Activated T-helper 1 cell treated with anti-CD3 and anti-CD28 coated beads, Interleukin-12 subunit alpha, Interleukin-12 subunit beta, Interleukin-2, Interleukin-4 antibody, amounts not matched to agents 30 ng/mL and 10 ng/mL and 1 ng/mL, durations not matched to agents 14 hours and 24 hours and 36 hours (primary cell): ENCODE measurements at regions of chrX and their contacts with region 1.

Region 1: DNA sequence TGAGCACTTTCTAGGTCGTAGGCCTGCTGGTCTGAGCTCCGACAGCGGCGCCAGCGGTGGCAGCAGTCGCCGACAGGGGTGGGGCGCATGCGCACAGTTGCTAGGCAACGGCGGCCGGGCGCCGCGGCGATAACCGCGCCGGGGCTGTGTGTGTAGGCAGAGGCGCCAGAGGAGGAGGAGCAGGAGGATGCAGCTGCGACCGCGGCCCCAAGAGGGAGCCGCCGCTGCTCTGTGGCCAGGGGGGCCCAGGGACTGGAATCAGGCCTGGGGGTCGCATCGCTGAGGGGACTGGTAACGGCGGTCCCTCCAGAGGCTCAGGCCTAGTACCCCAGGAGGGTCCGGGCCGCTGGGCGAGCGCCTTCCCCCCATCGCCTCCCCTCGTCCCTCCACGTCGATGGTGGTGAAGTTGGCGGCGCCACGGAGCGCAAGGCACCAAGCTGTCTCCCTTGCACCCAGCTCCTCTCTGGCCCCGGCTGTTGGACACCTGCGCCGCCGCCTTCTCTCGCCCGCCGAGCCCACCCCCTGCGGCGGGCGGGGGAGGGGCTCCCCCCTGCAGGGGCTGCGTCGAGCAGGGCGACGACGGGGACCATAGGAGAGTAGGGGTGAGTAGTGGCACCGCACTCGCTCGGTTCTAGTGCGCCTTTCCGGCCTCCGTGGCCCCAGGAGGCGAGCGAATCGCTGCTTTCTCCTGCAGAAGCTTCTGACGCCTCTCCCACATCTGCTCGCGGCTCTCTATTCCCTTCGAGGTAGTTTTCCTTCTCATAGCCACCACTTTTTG is 58.6 kb upstream of the ZC4H2 start:
- DNase-seq: peak; percentile 76
- H3K4me3 Mint-ChIP-seq: peak within 1 kb of the TSS; percentile 91
- H3K27ac Mint-ChIP-seq: peak within 1 kb of the TSS; percentile 92
- H3K4me1 Mint-ChIP-seq: peaks cover 20% of the 10 kb centered on the region
- H3K27me3 Mint-ChIP-seq: no peaks in the 10 kb centered on the region

Region 2: GRCh38 chrX:64394874-64395567 is 639.8 kb before region 1 on chrX and contains the start of gene MTMR8:
- intact Hi-C with region 1: loop called (anchors 1 kb)
- DNase-seq: peak; percentile 65
- H3K4me3 Mint-ChIP-seq: peak within 1 kb of the TSS; percentile 87
- H3K27ac Mint-ChIP-seq: peak within 1 kb of the TSS; percentile 54
- H3K4me1 Mint-ChIP-seq: peaks cover 17% of the 10 kb centered on the region
- H3K27me3 Mint-ChIP-seq: no peaks in the 10 kb centered on the region
- total RNA-seq, gene MTMR8: 4.1 and 7.1 TPM in 2 replicates

Region 3: DNA sequence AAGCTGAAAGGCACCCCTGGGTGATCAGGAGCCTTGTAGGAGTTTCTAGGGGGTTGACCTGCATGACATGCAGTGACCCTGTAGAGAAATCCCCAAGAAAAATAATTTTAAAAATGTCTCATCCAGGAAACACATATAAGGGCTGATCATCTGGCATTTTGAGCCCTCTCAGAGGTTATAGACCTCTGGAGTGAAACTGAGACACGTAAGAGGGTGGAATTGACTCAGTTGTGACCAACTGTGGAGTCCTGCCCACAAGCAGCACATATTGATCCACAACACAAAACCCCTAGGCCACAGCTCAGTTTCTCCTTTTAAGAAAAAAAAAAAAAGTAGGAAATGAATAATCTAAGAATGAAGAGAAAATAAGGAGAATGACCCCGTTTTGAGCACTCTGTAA is 607.1 kb before region 1 on chrX:
- intact Hi-C with region 1: no loop called
- DNase-seq: no peak
- H3K4me3 Mint-ChIP-seq: no peak overlapping the region
- H3K27ac Mint-ChIP-seq: no peak overlapping the region
- H3K4me1 Mint-ChIP-seq: no peaks in the 10 kb centered on the region
- H3K27me3 Mint-ChIP-seq: no peaks in the 10 kb centered on the region

Region 4: DNA sequence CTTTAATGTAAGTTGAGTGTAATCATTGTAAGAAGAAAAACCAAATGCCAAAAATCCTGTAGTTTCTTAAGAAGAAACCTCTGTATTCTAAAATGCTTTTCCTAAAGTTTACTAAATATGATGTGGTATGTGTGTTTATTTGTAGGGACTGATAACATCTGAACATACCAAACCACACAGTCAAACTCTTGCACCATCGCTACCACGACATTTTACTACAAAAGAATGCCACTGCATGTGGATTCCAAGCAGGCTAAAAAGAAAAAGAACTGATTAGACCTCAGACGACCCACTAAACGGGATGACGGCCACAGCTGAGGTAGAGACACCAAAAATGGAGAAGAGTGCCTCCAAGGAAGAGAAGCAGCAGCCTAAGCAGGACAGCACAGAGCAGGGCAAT is 453.6 kb after region 1 on chrX:
- intact Hi-C with region 1: no loop called
- DNase-seq: no peak
- H3K4me3 Mint-ChIP-seq: no peak overlapping the region
- H3K27ac Mint-ChIP-seq: no peak overlapping the region
- H3K4me1 Mint-ChIP-seq: no peaks in the 10 kb centered on the region
- H3K27me3 Mint-ChIP-seq: no peaks in the 10 kb centered on the region